PC-9 (cell line): ENCODE measurements at regions of chr9 and their contacts with region 1.

Region 1: GRCh38 chr9:107340920-107341632 is 58.0 kb downstream of the RAD23B start:
- DNase-seq: peak; percentile 67 to 80
- H3K4me3 ChIP-seq: no peak overlapping the region
- H3K27ac ChIP-seq: no peak overlapping the region
- H3K4me1 ChIP-seq: peaks cover 13% of the 10 kb centered on the region
- H3K27me3 ChIP-seq: no peaks in the 10 kb centered on the region
- CTCF ChIP-seq: peak; percentile 92

Region 2: GRCh38 chr9:107137495-107138202 is 203.4 kb before region 1 on chr9:
- CTCF ChIA-PET with region 1: no interaction called
- POLR2A ChIA-PET with region 1: no interaction called
- intact Hi-C with region 1: loop called (anchors 5 kb)
- DNase-seq: no peak
- H3K4me3 ChIP-seq: no peak overlapping the region
- H3K27ac ChIP-seq: no peak overlapping the region
- H3K4me1 ChIP-seq: no peaks in the 10 kb centered on the region
- H3K27me3 ChIP-seq: no peaks in the 10 kb centered on the region
- CTCF ChIP-seq: peak; percentile 76

Region 3: DNA sequence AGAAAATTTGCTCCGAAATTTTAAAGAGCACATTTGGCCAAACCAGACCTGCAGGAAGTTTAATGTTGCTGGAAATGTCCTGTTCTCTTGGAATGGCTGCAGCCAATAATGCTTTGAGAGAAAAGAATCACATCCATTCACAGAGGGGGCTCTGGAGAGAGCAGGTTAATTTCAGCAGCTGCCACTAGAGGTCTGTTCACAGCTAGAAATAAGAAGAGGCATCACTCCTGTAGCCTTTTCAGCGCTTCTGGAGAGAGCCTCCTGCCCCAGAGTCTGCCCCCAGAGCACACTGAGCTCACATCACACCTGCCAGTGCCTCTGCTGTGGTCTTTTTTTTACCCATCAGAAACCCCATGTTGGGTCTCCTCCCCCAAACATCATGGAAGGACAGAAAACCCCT is 182.8 kb before region 1 on chr9:
- CTCF ChIA-PET with region 1: interaction called, 5 read pairs
- POLR2A ChIA-PET with region 1: no interaction called
- intact Hi-C with region 1: loop called (anchors 5 kb)
- DNase-seq: no peak
- H3K4me3 ChIP-seq: no peak overlapping the region
- H3K27ac ChIP-seq: no peak overlapping the region
- H3K4me1 ChIP-seq: no peaks in the 10 kb centered on the region
- H3K27me3 ChIP-seq: no peaks in the 10 kb centered on the region
- CTCF ChIP-seq: peak; percentile 51

Region 4: GRCh38 chr9:107172160-107172978 is 168.7 kb before region 1 on chr9:
- CTCF ChIA-PET with region 1: interaction called, 3 read pairs
- POLR2A ChIA-PET with region 1: interaction called, 4 read pairs
- intact Hi-C with region 1: loop called (anchors 2 kb)
- DNase-seq: peak; percentile 56 to 71
- H3K4me3 ChIP-seq: no peak overlapping the region
- H3K27ac ChIP-seq: no peak overlapping the region
- H3K4me1 ChIP-seq: no peaks in the 10 kb centered on the region
- H3K27me3 ChIP-seq: no peaks in the 10 kb centered on the region
- CTCF ChIP-seq: peak; percentile 95

Region 5: DNA sequence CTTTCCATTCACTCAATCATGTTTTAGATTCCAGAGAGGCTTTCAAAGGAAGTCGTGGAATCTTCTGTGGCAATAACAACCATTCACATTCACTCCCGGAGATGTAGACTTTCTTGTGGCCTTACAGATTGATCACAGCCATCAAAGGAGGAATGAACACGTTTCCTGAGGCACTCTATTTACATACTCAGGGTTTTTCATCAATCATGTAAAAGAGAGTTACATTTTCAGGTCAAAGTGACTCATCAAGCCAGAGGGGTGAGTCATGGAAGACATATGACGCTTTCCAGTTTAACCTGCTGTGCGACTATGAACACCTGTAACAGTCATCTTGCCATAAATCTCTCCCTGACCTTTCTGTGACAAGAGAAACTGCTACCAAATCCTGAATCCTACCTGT is 97.3 kb before region 1 on chr9:
- CTCF ChIA-PET with region 1: interaction called, 6 read pairs
- POLR2A ChIA-PET with region 1: interaction called, 22 read pairs
- intact Hi-C with region 1: loop called (anchors 1 kb)
- DNase-seq: peak; percentile 76 to 99
- H3K4me3 ChIP-seq: peak overlapping the region; percentile 15; the same call in 1 of the 2 replicates
- H3K27ac ChIP-seq: peak overlapping the region; percentile 92
- H3K4me1 ChIP-seq: peaks cover 76% of the 10 kb centered on the region
- H3K27me3 ChIP-seq: no peaks in the 10 kb centered on the region
- CTCF ChIP-seq: no peak

Region 6: GRCh38 chr9:107282753-107283625 is 58.1 kb before region 1 on chr9 and contains the start of gene RAD23B:
- CTCF ChIA-PET with region 1: interaction called, 6 read pairs
- POLR2A ChIA-PET with region 1: no interaction called
- intact Hi-C with region 1: loop called (anchors 2 kb)
- DNase-seq: peak; percentile 94 to 99
- H3K4me3 ChIP-seq: peak within 1 kb of the TSS; percentile 77
- H3K27ac ChIP-seq: peak within 1 kb of the TSS; percentile 88
- H3K4me1 ChIP-seq: peaks cover 58% of the 10 kb centered on the region
- H3K27me3 ChIP-seq: no peaks in the 10 kb centered on the region
- CTCF ChIP-seq: no peak
- total RNA-seq, gene RAD23B: 164 and 176 TPM in 2 replicates

Region 7: GRCh38 chr9:107373809-107374208 is 32.7 kb after region 1 on chr9:
- CTCF ChIA-PET with region 1: interaction called, 12 read pairs
- POLR2A ChIA-PET with region 1: no interaction called
- intact Hi-C with region 1: no loop called
- DNase-seq: peak in 1 of 2 experiments; percentile 46
- H3K4me3 ChIP-seq: no peak overlapping the region
- H3K27ac ChIP-seq: no peak overlapping the region
- H3K4me1 ChIP-seq: no peaks in the 10 kb centered on the region
- H3K27me3 ChIP-seq: no peaks in the 10 kb centered on the region
- CTCF ChIP-seq: no peak